ENCODE measurements at regions of chr3 and their contacts with region 1.

Region 1: DNA sequence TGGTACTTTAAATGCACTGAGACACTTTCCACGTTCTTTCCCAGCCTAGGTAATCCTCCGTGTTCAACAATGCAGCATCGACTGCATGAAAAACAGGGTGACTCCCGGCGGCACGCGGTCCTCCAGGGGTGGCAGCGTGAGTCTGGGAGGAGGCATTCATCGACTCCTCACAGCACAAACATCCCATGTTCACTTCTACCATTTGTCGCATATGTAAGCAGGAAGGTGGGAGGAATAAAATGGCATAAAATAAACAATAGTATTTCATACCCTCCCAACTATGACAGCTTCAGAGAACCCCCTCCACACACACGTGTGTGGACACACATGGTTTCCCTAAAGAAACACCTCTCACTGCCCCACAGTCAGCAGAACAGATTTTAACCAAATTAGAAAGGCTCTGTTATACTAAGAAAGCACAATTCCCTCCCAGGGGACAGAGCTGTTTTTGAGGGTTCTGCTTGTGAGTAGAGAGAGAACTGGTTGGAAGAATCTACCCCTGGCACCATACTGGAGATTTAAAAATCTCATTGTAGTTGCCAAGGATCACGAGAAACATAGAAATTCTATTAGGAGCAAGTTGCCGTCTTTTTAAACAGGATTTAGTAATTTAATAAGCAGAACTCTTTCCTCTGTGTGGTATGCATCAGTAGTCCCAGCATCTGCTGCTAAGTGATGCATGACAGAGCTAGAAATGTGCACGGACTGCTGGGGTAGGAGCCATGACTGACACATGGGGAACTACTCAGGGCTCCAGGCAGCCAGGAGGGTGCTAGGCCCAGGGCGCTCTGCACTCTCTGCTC is 6.0 kb downstream of the FAM43A start:
- DNase-seq: no peak
- ATAC-seq: no peak
- H3K4me3 ChIP-seq: no peak overlapping the region
- H3K27ac ChIP-seq: peak overlapping the region in 6 of 12 donors; percentile 4 to 34 (median 12)
- H3K4me1 ChIP-seq: peaks cover 0 to 53% (median 42%) of the 10 kb centered on the region in 12 donors
- H3K27me3 ChIP-seq: no peaks in the 10 kb centered on the region
- CTCF ChIP-seq: no peak
- POLR2A ChIP-seq: no peak

Region 2: DNA sequence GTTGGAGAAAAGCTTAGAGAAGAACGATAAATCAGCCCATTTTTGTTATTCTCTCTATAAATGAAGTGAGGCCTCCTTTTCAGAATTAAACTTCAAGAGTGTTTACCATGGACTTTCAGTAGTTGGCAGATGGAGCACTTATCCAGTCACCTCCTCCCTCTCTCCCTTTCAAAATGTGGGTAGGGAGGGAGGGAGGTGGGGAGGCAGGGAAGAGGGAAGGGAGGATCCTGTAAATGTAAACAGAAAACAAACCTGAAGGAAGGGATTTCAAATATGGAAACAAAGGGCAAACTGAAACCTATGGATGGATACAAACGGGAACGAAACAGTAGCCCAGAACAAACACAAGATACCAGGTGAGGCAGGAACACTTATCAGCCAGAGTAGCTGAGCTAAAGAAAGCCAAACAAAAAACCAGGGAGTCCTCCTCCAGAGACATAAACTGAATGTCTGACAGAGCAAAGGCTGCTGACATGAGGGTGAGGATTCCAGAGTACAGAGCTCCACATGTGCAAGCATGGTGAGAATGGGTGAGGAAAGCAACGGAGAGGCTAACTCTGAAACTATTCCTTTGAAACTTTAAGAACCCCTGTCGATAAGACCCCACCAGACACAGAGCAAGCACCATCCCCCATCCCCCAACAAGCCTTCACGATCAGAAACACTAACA is 251.7 kb before region 1 on chr3:
- intact Hi-C with region 1: no loop called
- DNase-seq: no peak
- ATAC-seq: no peak
- H3K4me3 ChIP-seq: no peak overlapping the region
- H3K27ac ChIP-seq: no peak overlapping the region
- H3K4me1 ChIP-seq: peaks cover 0 to 5% (median 0%) of the 10 kb centered on the region in 12 donors
- H3K27me3 ChIP-seq: no peaks in the 10 kb centered on the region
- CTCF ChIP-seq: no peak
- POLR2A ChIP-seq: no peak

Region 3: DNA sequence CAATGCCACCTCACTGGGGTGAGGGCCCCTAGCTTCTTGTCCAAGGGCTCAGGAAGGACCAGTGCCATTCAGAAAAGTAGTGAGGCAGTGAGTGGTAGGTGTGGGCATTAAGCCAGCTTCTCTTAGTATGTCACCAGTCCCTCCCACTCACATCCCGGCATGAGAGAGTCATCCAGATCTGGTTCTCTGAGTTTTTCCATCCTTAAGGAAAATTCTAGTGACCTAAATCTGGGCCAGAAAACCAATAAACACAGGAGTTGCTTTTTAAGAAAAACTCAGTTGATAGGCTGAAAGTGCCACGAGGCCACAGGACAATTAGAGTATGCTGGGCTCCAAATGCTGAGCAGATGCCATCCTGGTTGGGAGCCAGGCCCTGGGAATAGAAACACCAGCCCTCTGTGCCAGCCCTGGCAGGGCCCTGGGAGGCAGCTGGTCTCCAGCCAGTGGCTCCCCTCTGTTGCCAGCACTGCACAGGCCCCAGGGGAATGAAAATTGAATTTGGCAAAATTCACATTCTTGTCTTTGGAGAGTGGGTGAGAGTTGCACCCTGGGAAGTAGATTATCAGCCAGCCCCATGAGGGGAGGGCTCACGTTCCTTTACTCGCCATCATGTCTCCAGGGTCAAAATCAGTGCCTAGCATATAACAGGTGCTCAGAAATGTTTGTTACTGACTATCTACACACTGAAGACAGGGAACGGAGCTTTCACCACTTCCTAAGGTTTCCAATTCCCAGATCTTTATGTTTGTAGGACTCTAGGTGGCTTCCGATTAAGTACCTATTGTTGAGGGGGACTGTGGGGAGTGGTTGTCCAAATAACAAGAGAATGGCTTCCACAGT is 46.8 kb after region 1 on chr3:
- intact Hi-C with region 1: loop called in 1 of 10 experiments (anchors 5 kb)
- DNase-seq: peak; percentile 75 to 87 (median 78)
- ATAC-seq: peak; percentile 97 to 99 (median 98)
- H3K4me3 ChIP-seq: no peak overlapping the region
- H3K27ac ChIP-seq: peak overlapping the region in 10 of 12 donors; percentile 27 to 68 (median 46)
- H3K4me1 ChIP-seq: peaks cover 0 to 41% (median 22%) of the 10 kb centered on the region in 12 donors
- H3K27me3 ChIP-seq: no peaks in the 10 kb centered on the region
- CTCF ChIP-seq: no peak
- POLR2A ChIP-seq: no peak

Measured in heart left ventricle (tissue), 16 donors.